Panc1 (cell line): ENCODE measurements at regions of chr1 and their contacts with region 1.

Region 1: DNA sequence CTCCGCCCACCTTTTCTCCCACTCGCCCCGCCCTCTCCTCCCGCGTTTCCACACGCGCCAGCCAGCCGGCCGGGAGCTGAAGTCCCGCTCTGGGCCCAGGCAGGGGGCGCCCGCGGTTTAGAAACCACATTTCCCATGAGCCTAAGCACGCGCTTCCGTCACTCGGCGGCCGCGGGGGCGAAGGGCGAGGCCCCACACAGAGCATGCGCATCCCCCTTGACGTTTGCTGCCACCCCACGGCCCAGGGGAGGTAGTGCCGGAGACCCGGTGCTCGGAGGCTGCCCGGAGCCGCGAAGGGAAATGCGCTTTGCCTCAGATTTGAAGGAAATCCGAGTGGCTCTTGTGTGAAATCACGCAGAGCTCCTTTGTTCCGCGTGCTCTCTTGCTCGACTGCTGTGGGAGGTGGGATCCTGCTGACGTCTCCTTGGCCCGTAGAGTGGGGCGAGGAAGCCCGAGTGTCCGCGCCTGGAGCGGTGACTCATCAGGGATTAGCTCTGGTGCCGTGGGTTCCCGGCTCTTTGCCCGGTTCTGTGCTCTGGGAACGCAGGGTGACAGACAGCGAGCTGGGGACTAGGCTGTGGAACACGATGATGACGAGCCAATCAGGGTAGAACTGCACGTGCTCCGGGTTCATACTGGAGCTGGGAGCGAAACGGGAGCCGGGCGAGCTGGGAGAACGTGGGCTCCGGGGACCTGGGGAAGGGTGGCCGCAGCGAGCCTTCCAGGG is 407 bp upstream of the B3GALNT2 start:
- DNase-seq: peak; percentile 95
- ATAC-seq: peak; percentile 94
- H3K4me3 ChIP-seq: peak overlapping the region; percentile 92 to 94
- H3K27ac ChIP-seq: peak overlapping the region; percentile 98
- H3K4me1 ChIP-seq: peaks cover 11% of the 10 kb centered on the region
- H3K27me3 ChIP-seq: no peaks in the 10 kb centered on the region
- CTCF ChIP-seq: peak; percentile 95

Region 2: GRCh38 chr1:235181561-235182245 is 323.0 kb before region 1 on chr1:
- CTCF ChIA-PET with region 1: no interaction called
- POLR2A ChIA-PET with region 1: no interaction called
- in situ Hi-C with region 1: no loop called
- intact Hi-C with region 1: no loop called
- DNase-seq: no peak
- ATAC-seq: no peak
- H3K4me3 ChIP-seq: no peak overlapping the region
- H3K27ac ChIP-seq: no peak overlapping the region
- H3K4me1 ChIP-seq: 0 out of 2 replicates have a peak, but pooled peaks cover 2% of the 10 kb centered on the region
- H3K27me3 ChIP-seq: no peaks in the 10 kb centered on the region
- CTCF ChIP-seq: no peak

Region 3: DNA sequence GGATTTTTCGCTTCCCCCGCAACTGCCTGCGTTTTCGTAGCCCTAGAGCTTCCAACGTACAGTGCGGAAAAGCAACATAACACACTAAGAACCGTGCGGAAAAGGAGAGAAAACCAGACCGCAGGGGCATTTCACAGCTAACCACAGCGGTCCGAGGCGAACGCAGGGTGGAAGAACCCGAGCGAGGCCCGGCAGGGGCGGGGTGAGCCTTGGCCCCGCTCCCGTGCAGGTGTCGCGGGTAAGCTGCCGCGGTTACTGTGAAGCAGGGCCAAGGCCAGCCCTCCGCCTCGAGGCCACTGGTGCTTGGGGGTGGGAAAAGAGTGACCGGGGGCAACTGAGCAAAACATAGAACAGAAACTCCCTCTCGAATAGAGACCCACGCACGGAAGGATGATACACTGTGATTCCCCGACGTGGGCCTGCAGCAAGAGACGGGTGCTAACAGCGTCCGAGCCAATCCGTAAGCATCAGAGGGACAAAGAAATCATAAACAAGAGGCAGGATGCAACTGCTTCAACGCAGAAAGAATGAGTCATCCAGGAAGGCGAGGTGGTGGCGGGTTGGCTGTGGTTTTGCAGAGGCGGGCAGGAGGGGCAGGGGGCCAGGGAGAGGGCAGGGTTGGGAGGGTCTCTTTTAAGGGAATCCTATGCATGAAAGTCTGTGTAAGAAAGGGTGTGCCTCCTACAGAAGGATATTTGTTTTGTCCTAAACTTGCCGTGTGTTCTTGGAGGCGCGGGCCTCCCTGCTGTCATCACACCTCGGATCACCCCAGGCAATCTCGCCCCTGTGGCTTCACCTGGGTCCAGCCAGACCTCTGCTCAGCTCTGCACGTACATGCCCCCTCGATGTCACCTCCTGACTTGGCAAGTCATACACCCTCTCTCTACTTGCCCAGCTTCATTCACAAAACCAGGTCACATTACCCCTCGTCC is 137.6 kb after region 1 on chr1:
- CTCF ChIA-PET with region 1: no interaction called
- POLR2A ChIA-PET with region 1: no interaction called
- in situ Hi-C with region 1: no loop called
- intact Hi-C with region 1: no loop called
- DNase-seq: no peak
- ATAC-seq: peak; percentile 53
- H3K4me3 ChIP-seq: no peak overlapping the region
- H3K27ac ChIP-seq: no peak overlapping the region
- H3K4me1 ChIP-seq: peaks cover 8% of the 10 kb centered on the region
- H3K27me3 ChIP-seq: no peaks in the 10 kb centered on the region
- CTCF ChIP-seq: no peak

Region 4: DNA sequence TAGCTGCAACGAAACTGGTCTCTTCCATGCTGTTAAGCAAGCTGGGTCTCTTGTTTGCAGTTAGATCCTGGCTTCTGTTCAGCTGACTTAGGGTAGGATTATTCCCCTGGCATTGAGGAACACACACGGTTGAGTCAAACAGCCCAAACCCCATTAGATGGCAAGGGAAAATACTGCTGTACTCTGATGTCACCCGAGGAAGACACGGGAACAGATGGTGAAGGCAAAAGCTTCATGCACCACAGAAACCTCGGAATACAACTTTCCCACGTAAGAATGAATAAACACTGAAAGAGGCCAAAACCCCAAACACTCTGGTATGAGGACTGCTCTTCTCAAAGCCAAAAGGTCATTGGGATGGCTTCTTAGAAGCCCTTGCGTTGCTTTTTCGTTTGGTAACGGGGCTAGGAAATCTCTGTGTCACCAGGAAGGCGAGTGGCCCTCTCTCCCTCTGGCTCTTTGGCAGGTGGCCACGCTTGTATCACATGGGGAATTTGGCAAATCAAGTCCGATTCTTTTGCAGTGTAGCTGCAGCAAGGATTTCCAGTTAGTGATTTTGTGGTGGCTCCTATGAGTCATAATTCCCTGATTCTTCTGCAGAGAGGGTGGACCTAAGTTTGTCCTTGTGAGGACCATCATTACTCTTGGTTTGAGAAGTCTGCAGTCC is 378.7 kb after region 1 on chr1:
- CTCF ChIA-PET with region 1: no interaction called
- POLR2A ChIA-PET with region 1: interaction called, 10 read pairs
- in situ Hi-C with region 1: no loop called
- intact Hi-C with region 1: no loop called
- DNase-seq: peak; percentile 86
- ATAC-seq: peak; percentile 83
- H3K4me3 ChIP-seq: peak overlapping the region; percentile 45 to 92
- H3K27ac ChIP-seq: peak overlapping the region; percentile 99
- H3K4me1 ChIP-seq: peaks cover 54% of the 10 kb centered on the region
- H3K27me3 ChIP-seq: no peaks in the 10 kb centered on the region
- CTCF ChIP-seq: no peak